Naive thymus-derived CD4-positive, alpha-beta T cell (primary cell): ENCODE measurements at regions of chr2 and their contacts with region 1.

Region 1: DNA sequence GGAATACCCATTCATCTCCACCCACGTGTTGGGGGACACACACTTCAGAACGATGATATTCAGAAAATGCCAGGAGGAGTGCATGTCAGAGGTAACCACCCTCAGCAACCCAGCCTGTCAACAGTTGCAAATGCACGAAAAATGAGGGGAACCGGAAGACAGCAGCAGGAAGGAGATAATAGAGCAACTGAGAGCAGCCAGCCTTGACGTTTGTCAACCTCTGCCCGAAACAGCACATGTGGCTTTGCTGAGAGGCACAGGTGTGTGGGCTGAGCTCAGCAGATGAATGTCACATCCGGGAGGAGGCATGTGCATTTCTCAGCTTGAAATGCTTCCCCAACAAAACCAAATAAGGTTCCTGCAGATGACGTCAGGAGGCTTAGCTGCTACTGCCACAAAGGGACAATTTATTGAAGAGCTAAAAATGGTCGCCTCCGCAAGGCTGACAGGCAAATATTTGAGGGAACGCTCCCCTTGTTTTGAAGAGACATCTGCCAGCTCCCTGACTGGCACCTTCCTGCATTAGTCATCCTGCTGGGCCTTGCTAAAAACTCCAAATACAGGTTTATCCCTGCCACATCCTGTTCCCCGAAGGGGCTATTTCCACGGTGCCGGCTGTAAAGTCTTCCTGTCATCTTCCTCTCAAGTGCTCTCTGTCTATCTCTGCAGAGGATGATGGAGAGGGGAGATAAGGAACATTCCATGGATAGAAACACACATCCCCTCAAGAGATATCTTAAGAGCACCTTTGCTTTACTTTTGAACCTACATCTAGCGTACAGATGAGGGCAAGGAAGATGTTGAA is 418.9 kb downstream of the NBAS start:
- DNase-seq: peak in 8 of 9 donors; percentile 66 to 87 (median 78)
- ATAC-seq: peak; percentile 97
- H3K4me3 ChIP-seq: peak overlapping the region; percentile 5
- H3K4me3 Mint-ChIP-seq: peak overlapping the region; percentile 30 to 82 (median 59)
- H3K27ac ChIP-seq: peak overlapping the region; percentile 42
- H3K27ac Mint-ChIP-seq: peak overlapping the region; percentile 26 to 96 (median 90)
- H3K4me1 ChIP-seq: peaks cover 13% of the 10 kb centered on the region in 2 donors
- H3K4me1 Mint-ChIP-seq: peaks cover 8 to 26% (median 23%) of the 10 kb centered on the region in 7 donors
- H3K27me3 ChIP-seq: no peaks in the 10 kb centered on the region
- H3K27me3 Mint-ChIP-seq: no peaks in the 10 kb centered on the region

Region 2: GRCh38 chr2:15163326-15163725 is 21.1 kb after region 1 on chr2:
- CTCF ChIA-PET with region 1: no interaction called
- POLR2A ChIA-PET with region 1: no interaction called
- intact Hi-C with region 1: no loop called
- DNase-seq: no peak
- ATAC-seq: no peak
- H3K4me3 ChIP-seq: no peak overlapping the region
- H3K4me3 Mint-ChIP-seq: no peak overlapping the region
- H3K27ac ChIP-seq: no peak overlapping the region
- H3K27ac Mint-ChIP-seq: no peak overlapping the region
- H3K4me1 ChIP-seq: no peaks in the 10 kb centered on the region
- H3K4me1 Mint-ChIP-seq: peaks cover 0 to 3% (median 0%) of the 10 kb centered on the region in 7 donors
- H3K27me3 ChIP-seq: no peaks in the 10 kb centered on the region
- H3K27me3 Mint-ChIP-seq: peaks cover 0 to 15% (median 0%) of the 10 kb centered on the region in 5 donors

Region 3: DNA sequence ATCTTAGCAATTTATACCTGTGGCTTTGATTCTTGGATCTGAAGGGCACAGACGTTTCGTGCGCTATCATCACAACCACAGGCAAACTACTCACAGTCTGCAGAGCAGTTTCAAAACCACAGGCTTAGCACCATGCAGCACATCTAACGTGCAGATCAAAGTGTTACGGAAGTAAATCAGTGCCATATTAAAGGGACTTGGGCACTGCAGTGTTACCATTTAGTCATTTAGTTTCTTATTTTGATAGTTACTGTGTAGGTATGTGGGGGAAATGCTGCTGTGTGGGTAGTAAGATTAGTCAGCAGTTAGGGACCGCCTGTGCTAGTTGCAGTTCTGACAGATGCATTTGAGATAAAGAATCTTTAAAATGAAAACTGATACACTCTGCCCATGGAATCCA is 34.8 kb after region 1 on chr2:
- CTCF ChIA-PET with region 1: no interaction called
- POLR2A ChIA-PET with region 1: no interaction called
- intact Hi-C with region 1: loop called (anchors 1 to 2 kb)
- DNase-seq: peak in 8 of 9 donors; percentile 40 to 78 (median 62)
- ATAC-seq: peak; percentile 93
- H3K4me3 ChIP-seq: no peak overlapping the region
- H3K4me3 Mint-ChIP-seq: peak overlapping the region in 9 of 10 donors; percentile 8 to 53 (median 40)
- H3K27ac ChIP-seq: no peak overlapping the region
- H3K27ac Mint-ChIP-seq: peak overlapping the region; percentile 26 to 83 (median 54)
- H3K4me1 ChIP-seq: peaks cover 0 to 25% of the 10 kb centered on the region in 2 donors
- H3K4me1 Mint-ChIP-seq: peaks cover 19 to 46% (median 36%) of the 10 kb centered on the region in 7 donors
- H3K27me3 ChIP-seq: no peaks in the 10 kb centered on the region
- H3K27me3 Mint-ChIP-seq: no peaks in the 10 kb centered on the region

Region 4: DNA sequence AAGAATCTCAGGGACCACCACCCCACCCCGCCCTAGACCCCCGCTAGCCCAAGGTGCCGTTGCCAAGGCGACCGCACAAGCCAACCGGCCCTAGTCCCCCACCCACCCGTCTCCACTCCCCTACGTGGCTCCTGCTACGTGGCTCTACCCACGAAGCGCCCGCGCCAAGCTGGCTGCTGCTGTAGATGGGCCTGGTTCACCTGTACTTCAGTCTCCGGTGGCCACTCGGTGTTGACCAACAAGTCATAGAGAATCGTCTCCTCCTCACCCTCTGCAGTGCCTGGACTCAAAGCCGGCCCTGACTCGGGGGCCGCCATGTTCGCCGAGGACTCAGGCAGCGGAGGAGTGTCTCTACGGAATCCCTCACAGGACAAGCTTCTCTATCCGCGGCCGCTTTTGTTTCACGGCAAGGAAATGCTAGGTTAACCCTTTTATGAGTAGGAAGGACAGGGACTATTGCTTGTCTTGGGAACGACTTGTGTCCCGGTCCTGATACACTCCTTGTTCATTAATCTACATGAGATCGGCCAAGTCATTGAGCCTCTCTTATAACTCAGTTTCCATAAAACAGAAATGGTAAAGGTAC is 418.8 kb after region 1 on chr2 and contains the start of gene NBAS:
- CTCF ChIA-PET with region 1: no interaction called
- POLR2A ChIA-PET with region 1: no interaction called
- intact Hi-C with region 1: loop called in 1 of 2 experiments (anchors 1 kb)
- DNase-seq: peak; percentile 50 to 79 (median 76)
- ATAC-seq: peak; percentile 93
- H3K4me3 ChIP-seq: peak within 1 kb of the TSS; percentile 61
- H3K4me3 Mint-ChIP-seq: peak within 1 kb of the TSS; percentile 88 to 100 (median 100)
- H3K27ac ChIP-seq: peak within 1 kb of the TSS; percentile 78
- H3K27ac Mint-ChIP-seq: peak within 1 kb of the TSS; percentile 93 to 99 (median 96)
- H3K4me1 ChIP-seq: peaks cover 4 to 17% of the 10 kb centered on the region in 2 donors
- H3K4me1 Mint-ChIP-seq: peaks cover 28 to 53% (median 45%) of the 10 kb centered on the region in 7 donors
- H3K27me3 ChIP-seq: no peaks in the 10 kb centered on the region
- H3K27me3 Mint-ChIP-seq: peaks cover 0 to 6% (median 0%) of the 10 kb centered on the region in 5 donors
- total RNA-seq, gene NBAS: 32.6 to 41.6 (median 36.4) TPM

Region 5: GRCh38 chr2:15591692-15592463 is 449.6 kb after region 1 on chr2 and contains the start of gene DDX1:
- CTCF ChIA-PET with region 1: no interaction called
- POLR2A ChIA-PET with region 1: no interaction called
- intact Hi-C with region 1: loop called (anchors 1 to 2 kb)
- DNase-seq: peak; percentile 78 to 93 (median 84)
- ATAC-seq: peak; percentile 98
- H3K4me3 ChIP-seq: peak within 1 kb of the TSS; percentile 85
- H3K4me3 Mint-ChIP-seq: peak within 1 kb of the TSS; percentile 90 to 96 (median 94)
- H3K27ac ChIP-seq: peak within 1 kb of the TSS; percentile 86
- H3K27ac Mint-ChIP-seq: peak within 1 kb of the TSS; percentile 91 to 97 (median 95)
- H3K4me1 ChIP-seq: peaks cover 0 to 5% of the 10 kb centered on the region in 2 donors
- H3K4me1 Mint-ChIP-seq: peaks cover 24 to 62% (median 53%) of the 10 kb centered on the region in 7 donors
- H3K27me3 ChIP-seq: no peaks in the 10 kb centered on the region
- H3K27me3 Mint-ChIP-seq: no peaks in the 10 kb centered on the region
- total RNA-seq, gene DDX1: 30.2 to 73.8 (median 55.3) TPM